ENCODE measurements at regions of chr18 and their contacts with region 1.

Region 1: GRCh38 chr18:47574966-47575365 is 323.5 kb upstream of the SKOR2 start:
- DNase-seq: no peak
- H3K4me3 Mint-ChIP-seq: no peak overlapping the region
- H3K27ac Mint-ChIP-seq: no peak overlapping the region
- H3K4me1 Mint-ChIP-seq: no peaks in the 10 kb centered on the region
- H3K27me3 Mint-ChIP-seq: peaks cover 75% of the 10 kb centered on the region
- CTCF ChIP-seq: no peak

Region 2: GRCh38 chr18:47470936-47471335 is 104.0 kb before region 1 on chr18:
- CTCF ChIA-PET with region 1: no interaction called
- intact Hi-C with region 1: no loop called
- DNase-seq: no peak
- H3K4me3 Mint-ChIP-seq: no peak overlapping the region
- H3K27ac Mint-ChIP-seq: no peak overlapping the region
- H3K4me1 Mint-ChIP-seq: no peaks in the 10 kb centered on the region
- H3K27me3 Mint-ChIP-seq: peaks cover 17% of the 10 kb centered on the region
- CTCF ChIP-seq: no peak

Region 3: GRCh38 chr18:47542551-47542950 is 32.4 kb before region 1 on chr18:
- CTCF ChIA-PET with region 1: no interaction called
- intact Hi-C with region 1: no loop called
- DNase-seq: no peak
- H3K4me3 Mint-ChIP-seq: no peak overlapping the region
- H3K27ac Mint-ChIP-seq: no peak overlapping the region
- H3K4me1 Mint-ChIP-seq: no peaks in the 10 kb centered on the region
- H3K27me3 Mint-ChIP-seq: peaks cover 83% of the 10 kb centered on the region
- CTCF ChIP-seq: no peak

Region 4: DNA sequence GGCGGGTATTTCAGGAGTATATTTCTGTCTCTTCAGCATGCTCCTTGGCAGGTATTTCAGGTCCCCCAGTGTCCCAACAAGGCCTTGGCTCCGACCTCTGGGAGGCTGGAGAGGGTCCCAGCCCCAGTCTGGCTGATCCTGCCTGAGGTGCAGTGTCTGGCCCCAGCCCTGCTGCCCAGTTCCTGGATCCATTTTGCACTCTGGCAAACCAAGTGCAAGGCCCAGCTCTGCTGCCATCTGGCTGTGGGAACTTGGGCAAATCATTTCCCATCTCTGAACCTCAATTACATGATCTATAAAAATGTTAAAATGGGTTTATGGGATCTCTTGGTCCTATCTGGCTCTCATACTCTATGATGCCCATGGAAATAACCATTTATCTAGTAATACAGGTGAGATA is 770.6 kb after region 1 on chr18:
- CTCF ChIA-PET with region 1: interaction called, 11 read pairs
- intact Hi-C with region 1: no loop called
- DNase-seq: peak; percentile 48
- H3K4me3 Mint-ChIP-seq: no peak overlapping the region
- H3K27ac Mint-ChIP-seq: no peak overlapping the region
- H3K4me1 Mint-ChIP-seq: no peaks in the 10 kb centered on the region
- H3K27me3 Mint-ChIP-seq: peaks cover 62% of the 10 kb centered on the region
- CTCF ChIP-seq: no peak

Region 5: GRCh38 chr18:49416511-49416910 is 1841.5 kb after region 1 on chr18:
- CTCF ChIA-PET with region 1: no interaction called
- intact Hi-C with region 1: no loop called
- DNase-seq: no peak
- H3K4me3 Mint-ChIP-seq: no peak overlapping the region
- H3K27ac Mint-ChIP-seq: no peak overlapping the region
- H3K4me1 Mint-ChIP-seq: no peaks in the 10 kb centered on the region
- H3K27me3 Mint-ChIP-seq: no peaks in the 10 kb centered on the region
- CTCF ChIP-seq: no peak

Measured in Calu3 (cell line).